GM18951 (cell line): ENCODE measurements at regions of chr20 and their contacts with region 1.

Region 1: GRCh38 chr20:49344975-49345374 is 67.1 kb upstream of the ZNFX1 start:
- POLR2A ChIP-seq: no peak

Region 2: GRCh38 chr20:49508435-49509199 is 163.6 kb after region 1 on chr20:
- in situ Hi-C with region 1: loop called (anchors 25 kb)
- POLR2A ChIP-seq: no peak

Region 3: DNA sequence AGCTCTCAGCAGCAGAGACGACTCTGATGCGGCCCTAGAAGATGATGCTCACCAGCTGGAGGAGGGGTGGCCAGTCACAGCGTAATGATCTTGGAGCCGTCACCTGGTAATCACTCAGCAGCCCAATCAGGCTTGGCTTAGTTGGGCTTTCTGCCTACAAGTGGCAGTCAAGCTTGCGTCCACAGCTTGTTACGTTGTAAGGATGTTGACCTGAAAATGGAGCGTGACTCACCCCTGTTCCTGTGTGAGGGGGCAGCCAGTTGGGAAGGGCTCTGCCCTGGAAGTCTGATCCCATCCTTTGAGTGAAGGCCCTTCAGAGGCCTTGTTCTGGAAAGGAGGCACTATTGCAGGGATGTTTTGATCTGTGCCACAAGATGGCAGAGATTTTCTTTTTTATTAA is 520.6 kb after region 1 on chr20:
- in situ Hi-C with region 1: loop called (anchors 10 kb)
- POLR2A ChIP-seq: no peak